ENCODE measurements at regions of chr1 and their contacts with region 1.

Region 1: GRCh38 chr1:50968158-50968820 is 1.8 kb upstream of the CDKN2C start:
- DNase-seq: peak; percentile 84
- H3K4me3 Mint-ChIP-seq: peak overlapping the region; percentile 95
- H3K27ac Mint-ChIP-seq: peak overlapping the region; percentile 96
- H3K4me1 Mint-ChIP-seq: peaks cover 23% of the 10 kb centered on the region
- H3K27me3 Mint-ChIP-seq: peaks cover 13% of the 10 kb centered on the region

Region 2: GRCh38 chr1:50955116-50955515 is 13.2 kb before region 1 on chr1:
- intact Hi-C with region 1: loop called (anchors 1 kb)
- DNase-seq: no peak
- H3K4me3 Mint-ChIP-seq: no peak overlapping the region
- H3K27ac Mint-ChIP-seq: no peak overlapping the region
- H3K4me1 Mint-ChIP-seq: peaks cover 13% of the 10 kb centered on the region
- H3K27me3 Mint-ChIP-seq: no peaks in the 10 kb centered on the region

Region 3: DNA sequence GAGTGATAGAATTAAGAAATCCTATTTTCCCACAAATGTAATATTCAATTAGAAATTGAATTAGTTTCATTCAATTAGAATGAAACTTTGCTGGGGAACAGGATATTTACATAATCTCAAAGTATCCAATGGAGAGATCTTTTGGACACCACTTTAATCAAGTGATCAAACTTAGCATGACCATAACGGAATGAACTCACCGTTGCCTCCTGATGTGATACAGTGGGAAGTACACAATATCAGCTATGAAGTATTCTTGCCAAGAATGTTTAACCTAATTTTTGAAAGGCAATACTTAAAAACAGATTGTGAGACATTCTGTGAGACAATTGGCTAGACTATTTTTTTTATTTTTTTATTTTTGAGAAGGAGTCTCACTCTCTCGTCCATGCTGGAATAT is 18.4 kb after region 1 on chr1:
- intact Hi-C with region 1: no loop called
- DNase-seq: no peak
- H3K4me3 Mint-ChIP-seq: no peak overlapping the region
- H3K27ac Mint-ChIP-seq: no peak overlapping the region
- H3K4me1 Mint-ChIP-seq: no peaks in the 10 kb centered on the region
- H3K27me3 Mint-ChIP-seq: peaks cover 41% of the 10 kb centered on the region

Region 4: GRCh38 chr1:51009381-51009780 is 41.1 kb after region 1 on chr1:
- intact Hi-C with region 1: no loop called
- DNase-seq: no peak
- H3K4me3 Mint-ChIP-seq: no peak overlapping the region
- H3K27ac Mint-ChIP-seq: no peak overlapping the region
- H3K4me1 Mint-ChIP-seq: no peaks in the 10 kb centered on the region
- H3K27me3 Mint-ChIP-seq: peaks cover 20% of the 10 kb centered on the region

Region 5: DNA sequence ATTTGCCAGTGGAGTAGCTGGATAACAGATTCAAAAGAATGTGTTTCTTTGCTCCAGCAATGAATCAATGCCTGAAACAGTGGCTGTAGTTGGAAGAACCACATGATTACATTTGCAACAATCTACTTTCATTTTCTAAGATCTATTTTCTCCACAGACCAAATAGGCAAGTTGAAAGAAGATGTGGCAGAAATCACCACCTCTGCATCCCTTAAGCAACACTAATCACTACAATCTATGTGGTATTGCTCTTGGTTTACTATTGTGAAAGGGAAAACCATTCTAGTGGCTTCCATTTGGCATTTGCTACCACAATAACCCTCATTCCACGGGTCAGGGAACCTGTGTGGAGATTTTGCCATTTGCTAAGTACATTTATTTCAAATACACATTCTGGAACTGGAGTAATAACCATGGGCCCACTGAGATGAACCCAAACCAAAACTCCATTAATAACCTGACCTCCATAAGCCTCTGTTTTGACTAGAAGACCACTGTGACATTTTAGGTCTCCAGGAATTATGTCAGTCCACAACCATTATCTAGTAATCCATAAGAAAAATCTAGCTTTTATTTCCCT is 200.1 kb after region 1 on chr1:
- intact Hi-C with region 1: loop called (anchors 5 kb)
- DNase-seq: no peak
- H3K4me3 Mint-ChIP-seq: no peak overlapping the region
- H3K27ac Mint-ChIP-seq: no peak overlapping the region
- H3K4me1 Mint-ChIP-seq: peaks cover 8% of the 10 kb centered on the region
- H3K27me3 Mint-ChIP-seq: peaks cover 36% of the 10 kb centered on the region

Region 6: DNA sequence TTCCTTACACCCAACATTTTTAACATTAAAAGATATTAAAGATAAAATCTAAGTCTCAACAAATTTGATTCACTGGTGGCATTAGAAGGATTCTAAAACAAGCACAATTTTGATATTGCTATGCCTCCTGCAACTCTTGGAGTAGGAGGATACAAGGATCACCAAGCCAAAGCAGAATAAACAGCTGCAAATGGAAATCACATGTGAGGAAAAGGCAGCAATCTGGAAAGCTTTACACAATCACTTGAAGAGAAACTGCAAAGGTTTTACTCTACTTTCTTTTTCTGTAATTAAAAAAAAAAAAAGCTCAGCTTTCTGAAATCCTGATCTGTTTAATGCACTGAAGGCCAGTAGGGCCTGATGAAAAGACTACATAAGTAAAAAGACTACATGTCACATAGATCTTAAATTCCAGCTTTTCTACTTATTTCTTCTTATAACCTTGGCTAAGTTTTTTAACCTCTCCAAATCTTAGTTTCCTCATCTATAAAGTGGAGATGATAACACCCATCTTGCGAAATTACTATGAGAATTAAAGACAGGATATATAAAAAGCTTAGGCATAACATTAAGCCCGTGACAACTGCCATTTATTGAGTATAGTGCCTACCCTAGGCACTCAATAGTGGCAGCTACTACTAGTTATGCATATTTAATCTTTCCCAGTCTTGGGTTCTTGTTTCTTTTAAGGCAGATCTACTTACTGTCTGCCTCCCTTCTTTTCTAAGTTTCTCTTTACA is 477.2 kb after region 1 on chr1:
- intact Hi-C with region 1: loop called (anchors 5 kb)
- DNase-seq: no peak
- H3K4me3 Mint-ChIP-seq: no peak overlapping the region
- H3K27ac Mint-ChIP-seq: no peak overlapping the region
- H3K4me1 Mint-ChIP-seq: peaks cover 53% of the 10 kb centered on the region
- H3K27me3 Mint-ChIP-seq: no peaks in the 10 kb centered on the region

Region 7: GRCh38 chr1:51549016-51549619 is 580.8 kb after region 1 on chr1:
- intact Hi-C with region 1: loop called (anchors 10 kb)
- DNase-seq: no peak
- H3K4me3 Mint-ChIP-seq: no peak overlapping the region
- H3K27ac Mint-ChIP-seq: no peak overlapping the region
- H3K4me1 Mint-ChIP-seq: peaks cover 15% of the 10 kb centered on the region
- H3K27me3 Mint-ChIP-seq: no peaks in the 10 kb centered on the region

Measured in activated T-helper 2 cell treated with anti-CD3 and anti-CD28 coated beads, Interferon-gamma antibody, Interleukin-2, Interleukin-4, amounts not matched to agents 10 μg/mL and 5 μg/mL and 100 μg/mL, durations not matched to agents 14 hours and 24 hours and 36 hours (primary cell).